Dorsolateral prefrontal cortex (tissue), 120 donors: ENCODE measurements at regions of chr1 and their contacts with region 1.

Region 1: GRCh38 chr1:65309304-65310077 is at the start of gene DNAJC6:
- DNase-seq: peak in 9 of 10 donors; percentile 25 to 80 (median 57)
- H3K4me3 ChIP-seq: peak within 1 kb of the TSS; percentile 8 to 76 (median 62)
- H3K27ac ChIP-seq: peak within 1 kb of the TSS in 57 of 59 donors; percentile 18 to 98 (median 73)
- H3K27me3 ChIP-seq: no peaks in the 10 kb centered on the region
- CTCF ChIP-seq: peak in 3 of 56 donors; percentile 8 to 15 (median 14)
- total RNA-seq, gene DNAJC6: 149 to 406 (median 315) TPM

Region 2: GRCh38 chr1:65254319-65255034 is 55.0 kb before region 1 on chr1:
- intact Hi-C with region 1: loop called in 1 of 2 experiments (anchors 2 kb)
- DNase-seq: peak; percentile 66 to 93 (median 84)
- H3K4me3 ChIP-seq: peak overlapping the region; percentile 69 to 99 (median 92)
- H3K27ac ChIP-seq: peak overlapping the region; percentile 82 to 100 (median 98)
- H3K27me3 ChIP-seq: no peaks in the 10 kb centered on the region
- CTCF ChIP-seq: peak in 24 of 56 donors; percentile 7 to 53 (median 28)

Region 3: GRCh38 chr1:65265651-65266351 is 43.7 kb before region 1 on chr1:
- intact Hi-C with region 1: loop called in 1 of 2 experiments (anchors 5 kb)
- DNase-seq: peak; percentile 45 to 76 (median 70)
- H3K4me3 ChIP-seq: peak overlapping the region; percentile 30 to 86 (median 73)
- H3K27ac ChIP-seq: peak overlapping the region; percentile 40 to 100 (median 96)
- H3K27me3 ChIP-seq: no peaks in the 10 kb centered on the region
- CTCF ChIP-seq: peak in 48 of 56 donors; percentile 9 to 65 (median 42)

Region 4: GRCh38 chr1:65393347-65393746 is 83.9 kb after region 1 on chr1:
- intact Hi-C with region 1: no loop called
- DNase-seq: no peak
- H3K4me3 ChIP-seq: no peak overlapping the region
- H3K27ac ChIP-seq: peak overlapping the region in 3 of 59 donors; percentile 8 to 21 (median 11)
- H3K27me3 ChIP-seq: no peaks in the 10 kb centered on the region
- CTCF ChIP-seq: no peak